PC-9 (cell line): ENCODE measurements at regions of chr20 and their contacts with region 1.

Region 1: DNA sequence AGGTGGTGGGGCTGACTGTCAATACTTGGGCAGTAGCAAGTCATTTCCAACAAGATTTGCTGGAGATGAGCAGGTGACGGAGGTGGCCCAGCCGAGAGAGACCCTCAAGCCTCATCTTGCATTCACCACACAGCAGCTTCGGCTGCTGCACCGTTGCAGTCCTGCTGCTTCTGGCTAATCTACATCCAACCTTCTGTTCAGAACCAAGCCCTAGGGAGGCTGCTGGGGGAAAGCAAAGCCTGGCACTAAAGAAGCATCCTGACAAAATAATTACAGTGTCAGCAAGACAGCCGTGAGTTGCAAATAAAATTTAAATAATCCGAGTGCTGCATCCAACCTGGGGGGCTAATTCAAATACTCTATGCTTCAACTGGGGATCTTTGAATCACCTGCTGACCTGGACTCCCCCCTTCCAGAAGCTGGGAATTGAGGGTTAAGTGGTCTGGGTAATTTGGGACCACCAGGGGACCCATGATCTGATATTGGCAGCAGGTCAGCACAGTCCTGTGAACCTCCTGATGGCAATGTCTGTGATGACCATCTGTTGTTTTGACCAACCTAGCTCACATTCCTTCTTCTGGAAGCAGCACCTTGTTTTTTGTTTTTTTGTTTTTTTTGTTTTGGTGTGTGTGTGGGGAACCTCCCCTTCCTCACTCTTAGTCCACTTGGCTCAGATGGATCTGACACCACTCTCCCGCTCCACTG is 131.5 kb upstream of the KCNG1 start:
- DNase-seq: no peak
- H3K4me3 ChIP-seq: no peak overlapping the region
- H3K27ac ChIP-seq: no peak overlapping the region
- H3K4me1 ChIP-seq: no peaks in the 10 kb centered on the region
- H3K27me3 ChIP-seq: peaks cover 89% of the 10 kb centered on the region
- CTCF ChIP-seq: no peak

Region 2: DNA sequence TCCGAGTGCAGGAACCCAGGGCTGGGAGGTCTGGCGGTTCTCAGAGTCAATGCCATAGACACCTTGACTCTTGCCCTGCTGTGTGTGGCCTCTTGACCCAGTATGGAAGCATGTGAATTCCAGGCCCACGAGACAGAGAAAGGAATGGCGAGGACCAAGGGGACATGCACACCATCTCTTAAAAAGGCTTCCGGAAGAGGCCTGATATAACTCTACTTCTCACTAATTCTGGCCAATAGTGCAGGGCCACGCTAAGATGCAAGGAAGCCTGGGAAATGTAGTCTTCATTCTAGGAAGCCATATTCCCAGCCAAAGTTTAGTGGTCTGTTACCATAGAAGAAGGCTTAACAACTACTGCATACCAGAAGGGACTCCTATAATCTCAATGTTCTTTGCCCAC is 45.5 kb after region 1 on chr20:
- CTCF ChIA-PET with region 1: no interaction called
- POLR2A ChIA-PET with region 1: no interaction called
- intact Hi-C with region 1: loop called (anchors 5 kb)
- DNase-seq: no peak
- H3K4me3 ChIP-seq: no peak overlapping the region
- H3K27ac ChIP-seq: no peak overlapping the region
- H3K4me1 ChIP-seq: peaks cover 9% of the 10 kb centered on the region; the same call in 1 of the 2 replicates
- H3K27me3 ChIP-seq: peaks cover 71% of the 10 kb centered on the region
- CTCF ChIP-seq: no peak

Region 3: GRCh38 chr20:51326201-51326819 is 171.9 kb after region 1 on chr20:
- CTCF ChIA-PET with region 1: no interaction called
- POLR2A ChIA-PET with region 1: no interaction called
- intact Hi-C with region 1: no loop called
- DNase-seq: no peak
- H3K4me3 ChIP-seq: no peak overlapping the region
- H3K27ac ChIP-seq: no peak overlapping the region
- H3K4me1 ChIP-seq: no peaks in the 10 kb centered on the region
- H3K27me3 ChIP-seq: no peaks in the 10 kb centered on the region; the same call in 1 of the 2 replicates
- CTCF ChIP-seq: peak; percentile 85